Activated CD4-positive, alpha-beta T cell treated with anti-CD3 and anti-CD28 coated beads, Interleukin-2, amount 10 ng/mL, durations not matched to agents 24 days and 14 days (primary cell): ENCODE measurements at regions of chr7 and their contacts with region 1.

Region 1: GRCh38 chr7:33932832-33933468 is 27.6 kb downstream of the BMPER start:
- DNase-seq: peak; percentile 87
- H3K4me3 Mint-ChIP-seq: no peak overlapping the region
- H3K27ac Mint-ChIP-seq: no peak overlapping the region
- H3K4me1 Mint-ChIP-seq: no peaks in the 10 kb centered on the region
- H3K27me3 Mint-ChIP-seq: no peaks in the 10 kb centered on the region

Region 2: GRCh38 chr7:32765185-32765584 is 1167.8 kb before region 1 on chr7:
- intact Hi-C with region 1: loop called (anchors 2 kb)
- DNase-seq: no peak
- H3K4me3 Mint-ChIP-seq: no peak overlapping the region
- H3K27ac Mint-ChIP-seq: no peak overlapping the region
- H3K4me1 Mint-ChIP-seq: peaks cover 4% of the 10 kb centered on the region
- H3K27me3 Mint-ChIP-seq: peaks cover 66% of the 10 kb centered on the region

Region 3: DNA sequence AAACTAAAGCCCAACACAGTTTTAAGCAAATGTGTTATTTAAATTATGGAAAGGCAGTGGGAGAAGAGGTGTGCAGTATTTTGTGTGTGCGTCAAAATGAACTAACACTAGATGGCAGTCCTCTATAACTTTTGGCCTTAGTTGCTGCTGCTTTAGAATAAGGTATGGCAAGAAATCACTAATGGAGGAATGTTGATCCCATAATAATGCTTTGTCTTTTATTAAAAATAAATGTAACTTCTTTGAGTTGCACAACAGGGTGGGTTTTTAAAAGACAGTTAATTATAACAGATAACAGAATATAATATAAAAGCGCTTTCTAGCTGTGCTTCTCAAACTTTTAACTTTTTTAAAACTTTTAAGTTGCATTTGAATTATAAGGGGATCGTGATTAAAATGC is 747.2 kb before region 1 on chr7:
- intact Hi-C with region 1: loop called (anchors 1 kb)
- DNase-seq: peak; percentile 69
- H3K4me3 Mint-ChIP-seq: no peak overlapping the region
- H3K27ac Mint-ChIP-seq: no peak overlapping the region
- H3K4me1 Mint-ChIP-seq: peaks cover 3% of the 10 kb centered on the region
- H3K27me3 Mint-ChIP-seq: no peaks in the 10 kb centered on the region

Region 4: GRCh38 chr7:33904681-33905388 is 28.1 kb before region 1 on chr7:
- intact Hi-C with region 1: no loop called
- DNase-seq: peak; percentile 60
- H3K4me3 Mint-ChIP-seq: peak overlapping the region; percentile 59
- H3K27ac Mint-ChIP-seq: no peak overlapping the region
- H3K4me1 Mint-ChIP-seq: peaks cover 2% of the 10 kb centered on the region
- H3K27me3 Mint-ChIP-seq: peaks cover 65% of the 10 kb centered on the region